Prostate gland (tissue), 2 donors: ENCODE measurements at regions of chr2 and their contacts with region 1.

Region 1: GRCh38 chr2:73233154-73233931 is at the start of gene PRADC1:
- DNase-seq: peak; percentile 100
- H3K4me3 ChIP-seq: peak within 1 kb of the TSS; percentile 60 to 77
- H3K27ac ChIP-seq: peak within 1 kb of the TSS; percentile 85 to 92
- H3K4me1 ChIP-seq: peaks cover 6% of the 10 kb centered on the region
- H3K27me3 ChIP-seq: no peaks in the 10 kb centered on the region
- CTCF ChIP-seq: no peak
- POLR2A ChIP-seq: peak; percentile 31
- total RNA-seq, gene PRADC1: 21.4 to 26.3 TPM

Region 2: DNA sequence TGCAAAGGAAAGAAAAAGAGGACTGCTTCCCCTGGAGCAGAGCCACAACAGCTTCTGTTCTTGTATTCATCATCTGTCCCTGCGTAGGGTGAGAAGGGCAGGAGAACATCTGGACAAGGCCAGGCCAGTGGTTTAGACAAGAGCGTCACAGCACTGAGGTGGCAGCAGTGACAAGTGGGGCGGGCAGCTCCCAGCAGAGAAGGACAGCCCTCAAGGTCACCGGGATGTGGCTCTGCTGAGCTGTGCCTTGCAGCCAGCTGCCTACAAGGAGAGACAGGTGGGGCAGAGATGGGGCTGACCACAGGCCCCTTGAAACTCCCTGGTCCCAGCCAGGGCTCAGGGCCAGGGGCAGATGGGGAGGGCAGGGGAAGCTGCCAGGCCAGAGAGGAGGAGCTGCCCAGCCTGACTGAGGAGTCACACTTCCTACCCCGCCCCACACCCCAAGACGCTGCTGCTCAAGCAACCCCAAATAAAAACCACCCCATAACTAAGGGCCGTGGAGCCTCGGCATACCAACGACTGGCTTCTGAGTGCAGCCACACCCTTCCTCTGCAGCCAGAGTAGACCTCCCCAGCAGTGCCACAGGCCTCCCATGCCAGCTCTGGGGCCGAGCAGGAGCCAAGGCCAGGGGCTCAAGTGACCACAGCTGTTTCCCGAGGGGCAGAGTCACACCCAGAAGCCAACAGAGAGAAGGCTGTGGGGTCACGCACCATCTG is 126.0 kb before region 1 on chr2:
- intact Hi-C with region 1: no loop called
- DNase-seq: no peak
- H3K4me3 ChIP-seq: no peak overlapping the region
- H3K27ac ChIP-seq: no peak overlapping the region
- H3K4me1 ChIP-seq: peaks cover 10% of the 10 kb centered on the region
- H3K27me3 ChIP-seq: no peaks in the 10 kb centered on the region
- CTCF ChIP-seq: no peak
- POLR2A ChIP-seq: no peak

Region 3: DNA sequence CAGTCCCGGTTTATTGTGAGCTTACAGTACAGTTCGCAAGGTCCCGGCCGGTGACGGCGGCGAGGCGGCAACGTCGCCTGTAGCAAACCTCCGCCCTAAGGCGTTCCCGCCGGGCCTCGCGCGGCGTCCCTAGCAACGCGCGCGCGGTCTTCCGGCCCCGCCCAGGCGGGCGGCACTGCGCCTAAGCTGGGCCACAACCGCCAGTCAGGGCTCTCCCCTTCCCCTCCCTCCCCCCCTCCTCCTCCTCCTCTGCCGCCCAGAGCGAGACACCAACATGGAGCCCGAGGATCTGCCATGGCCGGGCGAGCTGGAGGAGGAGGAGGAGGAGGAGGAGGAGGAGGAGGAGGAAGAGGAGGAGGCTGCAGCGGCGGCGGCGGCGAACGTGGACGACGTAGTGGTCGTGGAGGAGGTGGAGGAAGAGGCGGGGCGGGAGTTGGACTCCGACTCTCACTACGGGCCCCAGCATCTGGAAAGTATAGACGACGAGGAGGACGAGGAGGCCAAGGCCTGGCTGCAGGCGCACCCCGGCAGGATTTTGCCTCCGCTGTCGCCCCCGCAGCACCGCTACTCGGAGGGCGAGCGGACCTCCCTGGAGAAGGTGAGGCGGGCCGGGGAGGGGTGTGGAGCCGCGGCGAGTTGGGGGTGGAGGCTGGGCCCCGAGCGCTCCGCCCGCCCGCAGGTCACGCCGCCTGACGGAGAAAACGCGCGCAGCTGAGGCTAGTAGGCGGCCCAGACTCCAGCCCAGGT is 152.4 kb after region 1 on chr2 and contains the start of gene ALMS1:
- intact Hi-C with region 1: loop called (anchors 5 kb)
- DNase-seq: peak; percentile 82
- H3K4me3 ChIP-seq: peak within 1 kb of the TSS; percentile 67 to 74
- H3K27ac ChIP-seq: peak within 1 kb of the TSS; percentile 93
- H3K4me1 ChIP-seq: no peaks in the 10 kb centered on the region
- H3K27me3 ChIP-seq: no peaks in the 10 kb centered on the region
- CTCF ChIP-seq: peak in 2 of 4 experiments; percentile 37 to 42
- POLR2A ChIP-seq: peak; percentile 33
- total RNA-seq, gene ALMS1: 18.5 to 69.3 TPM

Region 4: GRCh38 chr2:73436019-73436418 is 202.7 kb after region 1 on chr2:
- intact Hi-C with region 1: no loop called
- DNase-seq: no peak
- H3K4me3 ChIP-seq: no peak overlapping the region
- H3K27ac ChIP-seq: no peak overlapping the region
- H3K4me1 ChIP-seq: no peaks in the 10 kb centered on the region
- H3K27me3 ChIP-seq: no peaks in the 10 kb centered on the region
- CTCF ChIP-seq: no peak
- POLR2A ChIP-seq: no peak